ENCODE measurements at regions of chr17 and their contacts with region 1.

Region 1: GRCh38 chr17:9924735-9925191 is 19.7 kb upstream of the RCVRN start:
- DNase-seq: no peak
- H3K4me3 ChIP-seq: no peak overlapping the region
- H3K27ac ChIP-seq: peak overlapping the region in 46 of 59 donors; percentile 2 to 77 (median 54)
- H3K27me3 ChIP-seq: no peaks in the 10 kb centered on the region
- CTCF ChIP-seq: peak; percentile 67 to 97 (median 90)

Region 2: GRCh38 chr17:10226930-10227685 is 302.3 kb after region 1 on chr17:
- intact Hi-C with region 1: loop called in 1 of 2 experiments (anchors 1 kb)
- DNase-seq: peak in 8 of 10 donors; percentile 46 to 68 (median 50)
- H3K4me3 ChIP-seq: no peak overlapping the region
- H3K27ac ChIP-seq: peak overlapping the region in 3 of 59 donors; percentile 3 to 84 (median 18)
- H3K27me3 ChIP-seq: no peaks in the 10 kb centered on the region
- CTCF ChIP-seq: peak; percentile 47 to 95 (median 83)

Region 3: GRCh38 chr17:10327640-10328039 is 402.9 kb after region 1 on chr17:
- intact Hi-C with region 1: loop called in 1 of 2 experiments (anchors 10 kb)
- DNase-seq: peak; percentile 28 to 92 (median 81)
- H3K4me3 ChIP-seq: no peak overlapping the region
- H3K27ac ChIP-seq: no peak overlapping the region
- H3K27me3 ChIP-seq: peaks cover 0 to 5% (median 0%) of the 10 kb centered on the region in 45 donors
- CTCF ChIP-seq: peak; percentile 81 to 97 (median 92)

Region 4: GRCh38 chr17:10618202-10618635 is 693.5 kb after region 1 on chr17:
- intact Hi-C with region 1: loop called (anchors 5 to 10 kb)
- DNase-seq: peak; percentile 30 to 83 (median 66)
- H3K4me3 ChIP-seq: peak overlapping the region in 18 of 59 donors; percentile 2 to 43 (median 30)
- H3K27ac ChIP-seq: peak overlapping the region in 3 of 59 donors; percentile 6 to 49 (median 36)
- H3K27me3 ChIP-seq: no peaks in the 10 kb centered on the region
- CTCF ChIP-seq: peak; percentile 39 to 96 (median 84)

Measured in dorsolateral prefrontal cortex (tissue), 120 donors.